ENCODE measurements at regions of chr2 and their contacts with region 1.

Region 1: GRCh38 chr2:161063157-161063954 is 96.9 kb upstream of the TANK start:
- DNase-seq: peak; percentile 17 to 70 (median 62)
- ATAC-seq: peak; percentile 94
- H3K4me3 ChIP-seq: no peak overlapping the region
- H3K4me3 Mint-ChIP-seq: no peak overlapping the region
- H3K27ac ChIP-seq: no peak overlapping the region
- H3K27ac Mint-ChIP-seq: peak overlapping the region in 3 of 9 donors; percentile 18 to 65 (median 53)
- H3K4me1 ChIP-seq: no peaks in the 10 kb centered on the region
- H3K4me1 Mint-ChIP-seq: peaks cover 2 to 12% (median 5%) of the 10 kb centered on the region in 7 donors
- H3K27me3 ChIP-seq: no peaks in the 10 kb centered on the region
- H3K27me3 Mint-ChIP-seq: peaks cover 0 to 5% (median 0%) of the 10 kb centered on the region in 5 donors

Region 2: DNA sequence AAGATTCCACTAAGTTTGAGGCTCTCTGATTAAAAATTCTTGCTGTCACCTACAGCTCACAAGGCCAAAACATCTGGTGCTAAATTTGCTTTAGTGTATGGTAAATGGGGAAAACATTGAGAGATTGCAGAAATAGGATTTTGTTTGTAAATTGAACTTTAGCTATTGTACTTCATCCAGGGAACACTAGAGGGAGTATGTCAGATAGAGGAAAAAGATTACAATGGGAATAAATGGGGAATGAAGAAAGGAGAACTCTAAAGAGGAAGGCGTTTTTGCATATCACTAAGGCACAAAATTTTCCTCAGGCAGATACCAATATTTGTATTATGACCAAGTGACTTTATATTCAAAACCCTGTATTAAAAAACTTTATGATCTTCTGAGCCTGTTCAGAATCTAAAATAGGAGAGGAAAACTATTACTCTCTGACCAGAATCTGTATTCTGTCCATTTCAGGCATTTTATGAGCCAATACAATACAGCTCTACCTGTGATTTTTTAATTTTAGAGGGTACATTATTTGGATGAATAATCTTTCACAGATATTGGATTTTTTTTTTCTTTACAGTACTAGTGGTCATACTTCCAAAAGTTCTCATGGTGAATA is 811.0 kb before region 1 on chr2:
- CTCF ChIA-PET with region 1: interaction called, 7 read pairs
- POLR2A ChIA-PET with region 1: no interaction called
- intact Hi-C with region 1: loop called (anchors 1 to 5 kb)
- DNase-seq: peak in 2 of 9 donors; percentile 14 to 18
- ATAC-seq: peak; percentile 57
- H3K4me3 ChIP-seq: no peak overlapping the region
- H3K4me3 Mint-ChIP-seq: no peak overlapping the region
- H3K27ac ChIP-seq: no peak overlapping the region
- H3K27ac Mint-ChIP-seq: peak overlapping the region in 1 of 9 donors; percentile 2
- H3K4me1 ChIP-seq: no peaks in the 10 kb centered on the region
- H3K4me1 Mint-ChIP-seq: peaks cover 0 to 5% (median 0%) of the 10 kb centered on the region in 7 donors
- H3K27me3 ChIP-seq: no peaks in the 10 kb centered on the region
- H3K27me3 Mint-ChIP-seq: peaks cover 4 to 18% (median 6%) of the 10 kb centered on the region in 5 donors

Region 3: GRCh38 chr2:160994141-160995002 is 69.0 kb before region 1 on chr2:
- CTCF ChIA-PET with region 1: interaction called, 3 read pairs
- POLR2A ChIA-PET with region 1: no interaction called
- intact Hi-C with region 1: loop called (anchors 1 to 2 kb)
- DNase-seq: peak; percentile 11 to 86 (median 80)
- ATAC-seq: peak; percentile 95
- H3K4me3 ChIP-seq: no peak overlapping the region
- H3K4me3 Mint-ChIP-seq: peak overlapping the region in 9 of 10 donors; percentile 4 to 76 (median 55)
- H3K27ac ChIP-seq: no peak overlapping the region
- H3K27ac Mint-ChIP-seq: peak overlapping the region in 7 of 9 donors; percentile 0 to 84 (median 26)
- H3K4me1 ChIP-seq: no peaks in the 10 kb centered on the region
- H3K4me1 Mint-ChIP-seq: peaks cover 5 to 13% (median 11%) of the 10 kb centered on the region in 7 donors
- H3K27me3 ChIP-seq: no peaks in the 10 kb centered on the region
- H3K27me3 Mint-ChIP-seq: peaks cover 0 to 13% (median 0%) of the 10 kb centered on the region in 5 donors

Region 4: GRCh38 chr2:161136696-161137324 is 73.5 kb after region 1 on chr2:
- CTCF ChIA-PET with region 1: interaction called, 9 read pairs
- POLR2A ChIA-PET with region 1: no interaction called
- intact Hi-C with region 1: loop called in 1 of 2 experiments (anchors 2 kb)
- DNase-seq: peak in 6 of 9 donors; percentile 31 to 76 (median 48)
- ATAC-seq: peak; percentile 94
- H3K4me3 ChIP-seq: peak overlapping the region; percentile 67
- H3K4me3 Mint-ChIP-seq: peak overlapping the region; percentile 68 to 98 (median 91)
- H3K27ac ChIP-seq: peak overlapping the region; percentile 83
- H3K27ac Mint-ChIP-seq: peak overlapping the region; percentile 89 to 99 (median 95)
- H3K4me1 ChIP-seq: peaks cover 21 to 27% of the 10 kb centered on the region in 2 donors
- H3K4me1 Mint-ChIP-seq: peaks cover 23 to 71% (median 58%) of the 10 kb centered on the region in 7 donors
- H3K27me3 ChIP-seq: no peaks in the 10 kb centered on the region
- H3K27me3 Mint-ChIP-seq: no peaks in the 10 kb centered on the region

Region 5: GRCh38 chr2:161946489-161947107 is 883.2 kb after region 1 on chr2:
- CTCF ChIA-PET with region 1: no interaction called
- POLR2A ChIA-PET with region 1: no interaction called
- intact Hi-C with region 1: loop called in 1 of 2 experiments (anchors 10 kb)
- DNase-seq: peak in 4 of 9 donors; percentile 18 to 38 (median 28)
- ATAC-seq: no peak
- H3K4me3 ChIP-seq: no peak overlapping the region
- H3K4me3 Mint-ChIP-seq: no peak overlapping the region
- H3K27ac ChIP-seq: no peak overlapping the region
- H3K27ac Mint-ChIP-seq: no peak overlapping the region
- H3K4me1 ChIP-seq: peaks cover 0 to 9% of the 10 kb centered on the region in 2 donors
- H3K4me1 Mint-ChIP-seq: peaks cover 0 to 36% (median 3%) of the 10 kb centered on the region in 7 donors
- H3K27me3 ChIP-seq: no peaks in the 10 kb centered on the region
- H3K27me3 Mint-ChIP-seq: peaks cover 0 to 20% (median 0%) of the 10 kb centered on the region in 5 donors

Measured in naive thymus-derived CD4-positive, alpha-beta T cell (primary cell).